Activated CD8-positive, alpha-beta memory T cell treated with anti-CD3 and anti-CD28 coated beads, Interleukin-2, amount 10 ng/mL, durations not matched to agents 7 days and 5 days (primary cell): ENCODE measurements at regions of chr17 and their contacts with region 1.

Region 1: DNA sequence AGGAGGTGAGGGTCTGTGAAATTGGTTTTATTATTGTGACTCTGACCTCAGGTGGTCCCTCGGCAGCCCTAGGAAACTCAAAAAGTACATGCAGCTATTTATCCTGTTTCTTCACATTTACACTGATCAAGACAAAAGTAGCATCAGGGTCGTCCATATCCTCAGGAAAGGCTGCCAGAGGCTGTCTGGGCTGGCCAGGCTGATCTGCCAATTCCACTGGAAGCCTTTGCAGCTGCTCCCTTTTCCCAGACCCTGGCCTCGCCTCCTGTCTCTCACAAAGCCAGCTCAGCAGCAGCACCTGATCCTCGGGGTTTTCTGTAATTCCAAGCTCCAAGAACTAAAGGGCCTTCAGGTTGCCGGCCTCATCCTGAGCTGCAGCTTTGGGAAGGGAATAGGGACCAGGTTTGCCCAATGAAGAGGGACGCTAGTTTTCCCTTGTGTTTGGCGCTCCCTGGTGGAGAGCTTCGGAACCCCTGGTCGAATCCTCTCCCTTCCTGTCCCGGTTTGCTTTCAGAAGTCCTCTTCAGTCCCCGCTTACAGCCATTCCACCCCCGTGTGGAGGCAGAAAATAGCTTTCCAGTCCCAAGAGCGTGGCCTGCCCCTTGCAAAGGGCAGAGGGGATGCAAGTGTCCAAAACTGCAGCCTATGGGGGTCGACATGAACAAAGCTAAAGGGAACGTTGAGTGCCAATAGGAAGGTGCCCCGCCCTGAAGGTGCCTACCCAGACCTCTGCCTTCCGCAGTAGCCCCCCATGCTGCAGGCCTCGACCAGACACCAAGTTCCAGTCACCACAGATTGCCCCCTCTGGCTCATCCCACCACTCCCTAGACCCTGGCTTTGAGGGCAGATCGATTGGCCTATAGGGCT is 13.4 kb downstream of the MFSD6L start:
- DNase-seq: peak; percentile 69
- ATAC-seq: no peak
- H3K4me3 Mint-ChIP-seq: no peak overlapping the region
- H3K27ac Mint-ChIP-seq: no peak overlapping the region
- H3K4me1 Mint-ChIP-seq: peaks cover 8% of the 10 kb centered on the region
- H3K27me3 Mint-ChIP-seq: peaks cover 17% of the 10 kb centered on the region

Region 2: GRCh38 chr17:8658810-8659209 is 127.0 kb before region 1 on chr17:
- CTCF ChIA-PET with region 1: no interaction called
- DNase-seq: no peak
- ATAC-seq: no peak
- H3K4me3 Mint-ChIP-seq: no peak overlapping the region
- H3K27ac Mint-ChIP-seq: no peak overlapping the region
- H3K4me1 Mint-ChIP-seq: peaks cover 7% of the 10 kb centered on the region
- H3K27me3 Mint-ChIP-seq: peaks cover 16% of the 10 kb centered on the region

Region 3: DNA sequence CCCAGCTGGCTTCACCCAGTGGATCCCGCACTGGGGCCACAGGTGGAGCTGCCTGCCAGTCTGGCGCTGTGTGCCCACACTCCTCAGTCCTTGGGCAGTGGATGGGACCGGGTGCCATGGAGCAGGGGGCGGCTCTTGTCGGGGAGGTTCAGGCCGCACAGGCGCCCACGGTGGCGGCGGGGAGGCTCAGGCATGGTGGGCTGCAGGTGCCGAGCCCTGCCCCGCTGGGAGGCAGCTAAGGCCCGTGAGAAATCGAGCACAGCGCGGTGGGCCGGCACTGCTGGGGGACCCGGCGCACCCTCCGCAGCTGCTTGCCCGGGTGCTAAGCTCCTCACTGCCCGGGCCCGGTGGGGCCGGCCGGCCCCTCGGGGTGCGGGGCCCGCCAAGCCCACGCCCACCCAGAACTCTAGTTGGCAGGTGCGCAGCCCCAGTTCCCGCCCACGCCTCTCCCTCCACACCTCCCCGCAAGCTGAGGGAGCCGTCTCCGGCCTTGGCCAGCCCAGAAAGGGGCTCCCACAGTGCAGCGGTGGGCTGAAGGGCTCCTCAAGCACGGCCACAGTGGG is 67.7 kb before region 1 on chr17:
- CTCF ChIA-PET with region 1: no interaction called
- DNase-seq: no peak
- ATAC-seq: no peak
- H3K4me3 Mint-ChIP-seq: no peak overlapping the region
- H3K27ac Mint-ChIP-seq: no peak overlapping the region
- H3K4me1 Mint-ChIP-seq: no peaks in the 10 kb centered on the region
- H3K27me3 Mint-ChIP-seq: peaks cover 2% of the 10 kb centered on the region

Region 4: DNA sequence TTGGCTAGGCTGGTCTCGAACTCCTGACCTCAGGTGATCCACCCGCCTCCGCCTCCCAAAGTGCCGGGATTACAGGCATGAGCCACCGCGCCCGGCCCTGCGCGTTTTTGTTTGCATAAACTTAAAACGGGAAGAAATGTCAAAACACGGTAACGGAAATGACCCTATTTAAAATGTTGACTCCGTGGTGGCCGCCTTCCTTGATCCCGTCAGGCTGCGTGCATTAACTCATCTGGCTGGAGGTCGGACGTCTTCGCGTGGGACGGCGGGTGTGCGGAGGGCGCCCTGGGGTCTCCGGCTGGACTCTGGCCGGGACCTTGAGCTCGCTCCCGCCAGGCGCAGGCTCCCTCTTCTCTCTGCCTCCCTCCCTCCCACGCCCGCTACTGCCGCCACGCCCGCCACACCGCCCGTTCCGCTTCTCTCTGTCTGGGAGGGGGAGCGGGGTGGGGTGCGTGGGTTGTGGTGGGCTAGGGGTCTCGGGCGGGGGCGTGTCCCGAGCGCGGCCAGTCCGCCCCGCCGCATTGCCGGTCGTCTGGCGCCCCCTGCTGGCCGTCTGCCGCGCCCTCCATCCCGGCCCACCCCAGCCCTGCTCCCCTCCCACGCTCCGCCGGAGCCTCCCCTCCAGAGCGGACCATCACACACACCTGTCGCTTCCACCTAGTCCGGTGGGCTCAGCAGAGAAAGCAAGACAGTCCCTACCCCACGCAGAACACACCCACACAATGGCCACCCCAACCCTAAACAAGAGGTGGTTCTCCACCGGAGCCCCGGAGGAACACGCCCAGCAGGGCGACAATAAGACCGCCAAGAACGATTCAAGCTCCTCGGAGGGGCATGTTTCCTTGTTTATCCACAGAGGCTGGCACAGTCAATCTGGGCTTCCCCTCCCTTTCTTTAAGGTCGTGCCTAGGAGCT is 39.9 kb before region 1 on chr17:
- CTCF ChIA-PET with region 1: interaction called, 21 read pairs
- DNase-seq: peak; percentile 83
- ATAC-seq: peak; percentile 82
- H3K4me3 Mint-ChIP-seq: peak overlapping the region; percentile 84
- H3K27ac Mint-ChIP-seq: peak overlapping the region; percentile 92
- H3K4me1 Mint-ChIP-seq: peaks cover 11% of the 10 kb centered on the region
- H3K27me3 Mint-ChIP-seq: peaks cover 10% of the 10 kb centered on the region

Region 5: GRCh38 chr17:8886087-8886684 is 100.4 kb after region 1 on chr17:
- CTCF ChIA-PET with region 1: no interaction called
- DNase-seq: no peak
- ATAC-seq: no peak
- H3K4me3 Mint-ChIP-seq: no peak overlapping the region
- H3K27ac Mint-ChIP-seq: peak overlapping the region; percentile 28
- H3K4me1 Mint-ChIP-seq: no peaks in the 10 kb centered on the region
- H3K27me3 Mint-ChIP-seq: no peaks in the 10 kb centered on the region